A673 (cell line): ENCODE measurements at regions of chr9 and their contacts with region 1.

Region 1: DNA sequence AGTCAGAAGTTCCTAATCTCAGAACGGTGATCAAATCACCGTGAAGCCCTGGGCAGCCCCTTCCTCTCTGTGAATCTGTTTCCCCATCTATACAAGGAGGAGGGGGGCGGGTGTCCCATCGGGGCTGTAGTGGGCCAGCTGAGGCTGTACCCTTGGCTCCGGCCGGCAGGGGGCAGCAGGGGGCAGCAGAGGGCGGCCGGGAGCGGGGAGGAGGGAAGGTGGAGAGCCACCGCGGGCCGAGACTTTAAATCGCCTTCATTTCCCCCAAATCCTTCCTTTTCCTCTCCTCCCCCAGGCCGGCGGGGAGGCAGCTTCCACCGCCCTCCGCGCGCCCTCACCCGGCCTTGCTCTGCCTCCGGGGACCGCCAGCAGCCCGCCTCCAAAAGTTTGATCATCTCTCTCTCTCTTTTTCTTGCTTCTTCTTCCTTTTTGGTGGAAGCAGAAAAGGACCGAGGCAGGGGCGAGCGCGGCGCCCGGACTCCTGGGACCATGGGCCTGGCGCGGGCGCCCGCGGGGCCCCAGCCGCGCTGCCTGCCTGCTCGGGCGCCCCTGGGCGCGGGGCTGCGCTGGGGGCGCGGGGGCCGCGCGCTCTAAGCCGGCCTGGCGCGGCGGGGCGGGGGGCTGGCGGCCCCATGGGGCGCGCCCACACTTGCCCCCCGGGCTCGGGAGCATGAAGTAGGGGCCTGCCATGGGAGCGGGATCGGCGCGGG is at the start of gene COL27A1:
- DNase-seq: peak; percentile 91
- H3K4me3 ChIP-seq: peak within 1 kb of the TSS; percentile 72
- H3K27ac ChIP-seq: peak within 1 kb of the TSS; percentile 67
- H3K4me1 ChIP-seq: peaks cover 10% of the 10 kb centered on the region
- H3K27me3 ChIP-seq: peaks cover 20% of the 10 kb centered on the region
- CTCF ChIP-seq: peak; percentile 97
- total RNA-seq, gene COL27A1: 37.0 and 37.6 TPM in 2 replicates

Region 2: GRCh38 chr9:114108016-114108833 is 47.2 kb before region 1 on chr9:
- CTCF ChIA-PET with region 1: interaction called, 12 read pairs
- POLR2A ChIA-PET with region 1: no interaction called
- intact Hi-C with region 1: no loop called
- DNase-seq: peak; percentile 75
- H3K4me3 ChIP-seq: no peak overlapping the region
- H3K27ac ChIP-seq: no peak overlapping the region
- H3K4me1 ChIP-seq: no peaks in the 10 kb centered on the region
- H3K27me3 ChIP-seq: peaks cover 41% of the 10 kb centered on the region
- CTCF ChIP-seq: peak; percentile 93

Region 3: DNA sequence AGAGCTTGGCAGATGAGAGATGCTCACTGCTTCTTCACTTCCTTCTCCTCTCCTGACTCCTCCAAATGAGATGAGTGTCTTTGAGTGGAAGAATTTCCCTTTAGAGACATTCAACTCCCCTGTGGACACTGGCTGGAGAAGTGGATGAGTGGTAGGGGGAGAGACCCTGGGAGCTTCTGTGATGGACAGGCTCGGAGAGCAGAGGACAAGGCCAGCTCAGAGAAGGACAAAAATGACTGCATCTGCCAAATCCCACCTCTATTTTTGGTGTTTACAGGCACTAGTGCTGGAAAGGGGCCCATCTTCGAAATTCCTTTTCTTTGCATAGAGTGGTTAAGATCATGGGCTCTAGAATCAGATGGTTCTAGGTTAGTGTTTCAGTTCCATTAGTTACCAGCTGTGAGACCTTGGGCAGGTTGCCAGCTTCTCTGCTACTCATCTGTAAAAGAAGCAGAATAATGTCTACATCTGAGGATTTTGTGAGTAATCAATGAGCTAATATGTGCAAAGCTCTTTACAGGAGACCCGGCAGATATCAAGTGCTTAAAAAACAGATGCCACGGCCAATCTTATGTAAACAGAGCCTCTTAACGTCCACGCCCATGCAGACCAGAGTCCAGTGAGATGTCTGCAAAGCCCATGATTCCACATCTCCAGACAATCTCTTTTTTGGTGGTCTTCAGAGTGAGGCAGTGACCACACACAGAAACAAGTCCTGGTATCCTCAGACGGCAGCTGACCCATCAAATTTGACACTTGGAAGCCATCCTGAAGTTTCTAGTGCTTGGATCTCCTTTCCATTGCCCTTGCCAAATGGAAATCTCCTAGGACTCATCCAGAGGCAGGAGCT is 13.6 kb before region 1 on chr9:
- CTCF ChIA-PET with region 1: no interaction called
- POLR2A ChIA-PET with region 1: no interaction called
- intact Hi-C with region 1: no loop called
- DNase-seq: peak; percentile 24
- H3K4me3 ChIP-seq: no peak overlapping the region
- H3K27ac ChIP-seq: no peak overlapping the region
- H3K4me1 ChIP-seq: no peaks in the 10 kb centered on the region
- H3K27me3 ChIP-seq: no peaks in the 10 kb centered on the region
- CTCF ChIP-seq: no peak

Region 4: GRCh38 chr9:114214173-114214572 is 58.8 kb after region 1 on chr9:
- CTCF ChIA-PET with region 1: no interaction called
- POLR2A ChIA-PET with region 1: no interaction called
- intact Hi-C with region 1: no loop called
- DNase-seq: no peak
- H3K4me3 ChIP-seq: no peak overlapping the region
- H3K27ac ChIP-seq: no peak overlapping the region
- H3K4me1 ChIP-seq: peaks cover 5% of the 10 kb centered on the region
- H3K27me3 ChIP-seq: no peaks in the 10 kb centered on the region
- CTCF ChIP-seq: no peak

Region 5: GRCh38 chr9:114263853-114264510 is 108.6 kb after region 1 on chr9:
- CTCF ChIA-PET with region 1: interaction called, 15 read pairs
- POLR2A ChIA-PET with region 1: no interaction called
- intact Hi-C with region 1: no loop called
- DNase-seq: no peak
- H3K4me3 ChIP-seq: no peak overlapping the region
- H3K27ac ChIP-seq: no peak overlapping the region
- H3K4me1 ChIP-seq: peaks cover 13% of the 10 kb centered on the region
- H3K27me3 ChIP-seq: no peaks in the 10 kb centered on the region
- CTCF ChIP-seq: 0 out of 2 replicates have a peak, but pooled peaks have one; percentile 27

Region 6: GRCh38 chr9:114271641-114272081 is 116.2 kb after region 1 on chr9:
- CTCF ChIA-PET with region 1: no interaction called
- POLR2A ChIA-PET with region 1: no interaction called
- intact Hi-C with region 1: loop called (anchors 5 kb)
- DNase-seq: peak; percentile 73
- H3K4me3 ChIP-seq: no peak overlapping the region
- H3K27ac ChIP-seq: no peak overlapping the region
- H3K4me1 ChIP-seq: no peaks in the 10 kb centered on the region
- H3K27me3 ChIP-seq: no peaks in the 10 kb centered on the region
- CTCF ChIP-seq: peak; percentile 75